Right cardiac atrium (tissue), 5 donors: ENCODE measurements at regions of chr6 and their contacts with region 1.

Region 1: DNA sequence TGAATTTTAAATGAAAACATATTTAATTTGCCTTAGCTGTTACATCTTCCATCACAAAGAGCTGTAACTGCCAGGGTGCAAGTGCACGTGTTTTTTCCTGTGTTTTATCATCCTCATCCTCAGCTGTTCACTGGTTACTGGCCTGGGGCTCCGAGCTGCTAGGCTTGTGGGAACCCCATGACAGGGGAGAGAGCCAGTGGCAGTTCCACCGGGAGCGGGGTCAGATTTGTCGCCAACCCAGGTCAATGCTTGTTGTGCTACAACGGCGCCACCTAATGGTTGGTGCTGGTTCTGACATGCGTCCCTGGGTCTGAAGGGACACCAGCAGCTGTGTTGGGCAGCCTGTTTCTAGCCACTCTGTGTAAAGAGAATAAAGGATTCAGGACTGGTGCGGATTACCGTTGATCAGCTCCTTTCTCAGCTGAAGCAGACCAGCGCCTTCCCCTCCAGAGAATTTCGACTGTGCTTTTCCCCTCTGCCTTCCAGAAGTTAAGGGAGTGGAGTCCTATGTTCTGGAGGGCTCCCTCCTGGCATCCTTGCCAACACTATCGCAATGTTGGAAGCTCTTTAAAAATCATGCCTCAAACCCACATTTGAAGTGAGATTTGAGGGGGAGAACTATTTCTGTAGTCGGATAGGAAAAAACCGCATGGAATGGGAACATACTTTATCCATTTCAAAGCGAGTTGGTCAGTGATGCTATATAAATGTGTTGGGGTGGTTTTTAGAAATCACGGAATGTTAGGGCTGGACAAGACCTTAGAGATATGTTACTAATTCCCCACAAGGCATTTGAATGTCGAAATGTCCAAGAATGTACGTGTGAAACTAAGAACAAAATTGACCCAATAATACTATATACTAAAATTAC is 32.1 kb downstream of the SUMO4 start:
- DNase-seq: peak; percentile 89 to 97 (median 95)
- ATAC-seq: peak; percentile 90 to 92
- H3K4me3 ChIP-seq: no peak overlapping the region
- H3K27ac ChIP-seq: no peak overlapping the region
- H3K4me1 ChIP-seq: no peaks in the 10 kb centered on the region
- H3K27me3 ChIP-seq: no peaks in the 10 kb centered on the region

Region 2: GRCh38 chr6:149028767-149029405 is 403.3 kb before region 1 on chr6:
- intact Hi-C with region 1: loop called (anchors 5 kb)
- DNase-seq: no peak
- ATAC-seq: peak; percentile 71 to 80
- H3K4me3 ChIP-seq: no peak overlapping the region
- H3K27ac ChIP-seq: no peak overlapping the region
- H3K4me1 ChIP-seq: no peaks in the 10 kb centered on the region
- H3K27me3 ChIP-seq: no peaks in the 10 kb centered on the region

Region 3: GRCh38 chr6:149082286-149082707 is 349.8 kb before region 1 on chr6:
- intact Hi-C with region 1: loop called (anchors 2 to 5 kb)
- DNase-seq: peak; percentile 80 to 93 (median 86)
- ATAC-seq: peak; percentile 34 to 71
- H3K4me3 ChIP-seq: no peak overlapping the region
- H3K27ac ChIP-seq: no peak overlapping the region
- H3K4me1 ChIP-seq: peaks cover 7% of the 10 kb centered on the region
- H3K27me3 ChIP-seq: no peaks in the 10 kb centered on the region

Region 4: GRCh38 chr6:149368065-149368464 is 64.1 kb before region 1 on chr6:
- intact Hi-C with region 1: no loop called
- DNase-seq: no peak
- ATAC-seq: no peak
- H3K4me3 ChIP-seq: no peak overlapping the region
- H3K27ac ChIP-seq: no peak overlapping the region
- H3K4me1 ChIP-seq: no peaks in the 10 kb centered on the region
- H3K27me3 ChIP-seq: no peaks in the 10 kb centered on the region

Region 5: DNA sequence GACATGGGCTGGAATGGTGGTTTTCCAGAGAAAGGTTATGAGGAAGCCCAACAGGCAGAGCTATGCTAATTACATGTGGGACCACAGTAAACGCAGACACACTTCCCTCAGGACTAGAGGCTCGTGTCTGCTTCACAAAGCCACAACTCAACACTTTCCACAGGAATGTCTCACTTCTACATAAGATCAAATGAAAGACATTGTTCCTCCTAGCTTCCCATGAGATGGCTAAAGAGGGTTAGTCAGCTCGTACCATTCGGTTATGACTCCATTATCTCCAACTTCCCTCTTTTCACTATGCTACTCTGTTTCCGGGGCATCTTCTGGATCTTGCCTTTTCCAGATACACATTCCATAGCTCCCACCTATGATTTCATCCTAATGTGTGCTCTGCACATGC is 81.8 kb after region 1 on chr6:
- intact Hi-C with region 1: loop called in 1 of 4 experiments (anchors 2 kb)
- DNase-seq: no peak
- ATAC-seq: peak in 1 of 2 donors; percentile 48
- H3K4me3 ChIP-seq: no peak overlapping the region
- H3K27ac ChIP-seq: no peak overlapping the region
- H3K4me1 ChIP-seq: no peaks in the 10 kb centered on the region
- H3K27me3 ChIP-seq: no peaks in the 10 kb centered on the region